AG04449 (cell line): ENCODE measurements at regions of chr9 and their contacts with region 1.

Region 1: DNA sequence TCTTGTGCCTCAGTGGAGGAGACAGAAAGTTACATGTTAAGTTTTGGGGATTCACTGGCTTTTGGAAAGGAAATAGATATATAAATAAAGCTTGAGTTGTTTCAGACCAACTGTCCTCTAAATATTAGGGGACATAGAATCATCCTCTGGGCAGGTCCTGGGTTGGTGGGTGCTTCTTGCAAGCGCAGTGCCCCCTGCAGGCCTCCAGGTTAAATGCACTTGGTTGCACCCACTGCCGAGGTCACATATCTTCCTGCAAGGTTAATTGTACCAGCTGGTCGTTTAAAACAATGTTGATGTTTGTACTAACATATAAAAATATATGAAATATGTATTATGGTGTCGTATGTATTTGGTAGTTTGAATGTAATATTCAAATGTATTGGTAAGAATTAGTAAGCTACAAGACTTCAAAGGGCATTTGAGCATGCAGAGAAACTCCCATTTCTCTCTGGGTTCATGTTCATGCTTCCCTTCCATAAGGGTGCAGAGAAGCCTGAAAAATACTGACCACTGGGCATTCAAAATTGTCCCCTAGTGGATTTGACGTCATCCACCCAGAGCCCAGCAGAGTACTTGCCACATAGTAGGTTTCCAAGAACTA is 87.0 kb downstream of the ZNF618 start:
- DNase-seq: no peak
- H3K4me3 ChIP-seq: no peak overlapping the region
- CTCF ChIP-seq: peak; percentile 66

Region 2: GRCh38 chr9:113516840-113517577 is 446.1 kb before region 1 on chr9:
- CTCF ChIA-PET with region 1: no interaction called
- POLR2A ChIA-PET with region 1: no interaction called
- DNase-seq: no peak
- H3K4me3 ChIP-seq: no peak overlapping the region
- CTCF ChIP-seq: no peak

Region 3: DNA sequence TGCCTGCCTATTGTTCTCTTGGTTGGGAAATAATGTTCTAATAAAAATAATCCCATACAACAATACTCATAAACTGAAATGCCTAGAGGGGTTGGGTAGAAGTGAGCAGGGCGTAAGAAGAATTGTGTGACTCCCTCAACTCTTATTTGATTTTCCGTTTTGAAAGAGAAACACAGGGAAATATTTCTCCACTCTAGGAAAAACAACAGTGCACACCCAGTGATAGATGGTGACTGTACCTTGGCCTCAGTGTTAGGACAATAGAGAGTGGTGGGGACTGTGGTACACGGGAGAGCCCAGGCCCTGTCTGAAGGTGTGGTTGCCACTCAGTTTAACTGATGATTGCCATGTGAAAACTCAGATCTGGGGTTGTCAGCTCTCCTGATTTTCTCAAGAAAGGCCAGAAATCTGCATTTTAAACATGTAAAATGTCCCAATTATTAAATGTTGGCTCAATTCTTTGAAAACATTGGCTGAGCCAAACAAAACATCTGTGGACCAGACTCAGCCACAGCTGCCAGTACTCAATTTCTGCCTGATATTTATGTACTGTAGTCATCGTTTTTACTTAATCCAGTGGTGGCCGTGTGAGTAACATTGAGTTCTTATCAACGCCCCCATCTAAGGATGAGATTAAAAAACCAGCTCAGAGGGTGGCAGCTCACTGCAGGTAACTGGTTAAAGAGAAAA is 190.9 kb before region 1 on chr9:
- CTCF ChIA-PET with region 1: no interaction called
- POLR2A ChIA-PET with region 1: no interaction called
- DNase-seq: peak; percentile 9
- H3K4me3 ChIP-seq: no peak overlapping the region
- CTCF ChIP-seq: no peak

Region 4: DNA sequence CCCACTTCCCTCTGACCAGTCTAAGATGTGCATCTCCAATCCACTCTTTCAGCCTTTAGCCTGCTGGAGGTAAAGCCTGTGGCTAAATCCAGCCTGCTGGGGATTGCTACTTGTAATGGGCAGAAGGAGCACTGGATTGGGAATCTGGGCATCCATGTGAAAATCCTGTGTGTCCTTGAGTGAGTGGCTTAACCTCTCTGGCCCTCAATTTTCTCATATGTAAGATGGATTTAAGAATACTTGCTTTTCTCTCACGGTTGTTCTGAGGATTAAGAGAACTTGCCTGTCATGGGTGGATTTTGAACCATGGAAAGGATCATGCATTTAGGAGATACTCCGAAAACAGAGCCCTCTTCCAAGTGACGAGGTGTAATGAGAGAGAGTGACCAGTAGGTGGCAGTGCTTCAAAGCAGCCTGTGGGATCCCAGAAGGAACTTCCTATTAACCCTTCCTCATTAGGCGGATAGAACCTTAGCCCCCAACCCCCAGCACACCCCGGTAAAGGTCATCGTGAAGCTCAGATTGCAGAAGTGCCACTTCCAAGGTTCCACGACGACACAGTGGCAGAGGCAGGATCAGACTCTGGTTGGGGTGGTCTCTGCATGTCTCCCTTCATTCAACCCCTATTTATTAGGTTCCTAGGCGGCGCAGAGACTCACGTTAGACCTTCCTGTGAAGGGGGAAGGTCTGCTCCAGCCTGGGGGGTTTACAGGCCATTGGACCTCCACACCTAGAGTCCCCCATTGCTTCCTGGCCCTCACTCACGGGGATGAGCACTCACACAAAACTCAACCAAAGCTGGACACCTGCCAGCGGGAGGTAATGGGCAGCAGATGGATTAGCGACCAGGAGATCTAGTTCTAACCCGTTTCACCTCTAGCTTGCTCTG is 155.7 kb before region 1 on chr9:
- CTCF ChIA-PET with region 1: interaction called, 45 read pairs
- POLR2A ChIA-PET with region 1: no interaction called
- DNase-seq: no peak
- H3K4me3 ChIP-seq: peak overlapping the region; percentile 33
- CTCF ChIP-seq: peak; percentile 88

Region 5: DNA sequence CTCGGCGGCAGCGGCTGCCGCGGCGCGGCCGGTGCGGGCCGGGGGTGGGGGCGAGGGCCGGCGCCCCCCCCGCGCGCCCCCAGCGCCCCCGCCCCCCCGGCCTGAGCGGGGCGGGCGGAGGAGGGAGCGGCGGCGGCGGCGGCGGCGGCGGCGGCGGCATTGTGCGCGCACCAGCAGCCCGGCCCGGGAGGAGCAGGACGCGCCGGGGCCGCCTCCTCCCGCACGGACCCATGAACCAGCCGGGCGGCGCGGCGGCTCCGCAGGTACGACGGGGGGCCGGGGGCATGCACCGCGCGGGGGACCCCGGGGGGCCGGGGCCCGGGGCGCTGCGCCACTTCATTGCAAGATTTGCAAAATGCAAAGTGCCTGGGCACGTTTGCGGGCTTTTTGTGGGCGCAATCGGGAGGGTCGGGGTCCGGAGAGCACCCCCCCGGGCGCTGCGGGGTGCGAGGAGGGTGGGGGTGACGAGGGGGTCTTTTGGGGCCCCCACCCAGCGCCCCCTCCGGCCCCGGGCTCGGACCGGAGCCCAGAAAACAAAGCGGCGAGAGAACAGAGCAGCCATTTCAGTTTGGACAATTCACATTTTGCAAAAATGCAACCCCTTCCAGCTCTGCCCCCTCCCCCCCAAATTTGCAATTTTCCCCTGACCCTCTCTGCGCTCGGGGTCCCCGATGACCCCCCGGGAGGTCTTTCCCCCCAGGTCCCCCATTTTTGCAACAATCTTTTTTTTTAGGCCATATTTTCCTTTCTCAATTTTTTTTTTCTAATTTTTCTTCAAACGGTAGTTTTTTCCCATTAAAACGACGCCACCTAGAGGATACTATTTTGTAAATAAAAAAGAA is 86.7 kb before region 1 on chr9 and contains the start of gene ZNF618:
- CTCF ChIA-PET with region 1: interaction called, 12 read pairs
- POLR2A ChIA-PET with region 1: no interaction called
- DNase-seq: no peak
- H3K4me3 ChIP-seq: peak within 1 kb of the TSS; percentile 68
- CTCF ChIP-seq: no peak

Region 6: GRCh38 chr9:113948891-113949570 is 14.1 kb before region 1 on chr9:
- CTCF ChIA-PET with region 1: interaction called, 16 read pairs
- POLR2A ChIA-PET with region 1: no interaction called
- DNase-seq: no peak
- H3K4me3 ChIP-seq: no peak overlapping the region
- CTCF ChIP-seq: no peak

Region 7: DNA sequence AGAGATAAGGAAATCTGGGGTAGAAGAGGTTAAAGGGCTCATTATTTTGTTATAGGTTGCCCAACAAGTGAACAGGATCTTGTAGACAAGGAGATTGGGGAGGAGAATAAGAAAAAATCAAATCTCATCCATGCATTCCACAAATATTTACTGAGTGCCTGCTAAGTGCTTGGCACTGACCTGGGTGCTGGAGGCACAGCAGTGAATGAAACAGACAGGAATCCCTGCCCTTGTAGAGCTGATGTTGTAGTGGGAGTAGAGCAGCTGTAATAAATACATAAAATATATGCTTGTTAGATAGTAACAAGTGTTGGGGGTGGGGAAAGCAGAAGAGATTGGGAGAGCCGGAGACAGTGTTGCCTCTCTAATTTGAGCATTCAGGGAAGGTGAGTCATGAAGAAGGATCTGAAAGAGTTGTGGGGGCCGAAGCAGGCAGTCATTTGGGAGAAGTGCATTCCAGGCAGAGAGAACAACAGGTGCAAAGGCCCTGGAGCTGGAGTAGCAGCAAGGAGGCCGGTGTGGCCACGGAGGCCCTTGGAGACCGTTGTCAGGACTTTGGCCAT is 10.8 kb after region 1 on chr9:
- CTCF ChIA-PET with region 1: interaction called, 41 read pairs
- POLR2A ChIA-PET with region 1: no interaction called
- DNase-seq: no peak
- H3K4me3 ChIP-seq: no peak overlapping the region
- CTCF ChIP-seq: no peak

Region 8: DNA sequence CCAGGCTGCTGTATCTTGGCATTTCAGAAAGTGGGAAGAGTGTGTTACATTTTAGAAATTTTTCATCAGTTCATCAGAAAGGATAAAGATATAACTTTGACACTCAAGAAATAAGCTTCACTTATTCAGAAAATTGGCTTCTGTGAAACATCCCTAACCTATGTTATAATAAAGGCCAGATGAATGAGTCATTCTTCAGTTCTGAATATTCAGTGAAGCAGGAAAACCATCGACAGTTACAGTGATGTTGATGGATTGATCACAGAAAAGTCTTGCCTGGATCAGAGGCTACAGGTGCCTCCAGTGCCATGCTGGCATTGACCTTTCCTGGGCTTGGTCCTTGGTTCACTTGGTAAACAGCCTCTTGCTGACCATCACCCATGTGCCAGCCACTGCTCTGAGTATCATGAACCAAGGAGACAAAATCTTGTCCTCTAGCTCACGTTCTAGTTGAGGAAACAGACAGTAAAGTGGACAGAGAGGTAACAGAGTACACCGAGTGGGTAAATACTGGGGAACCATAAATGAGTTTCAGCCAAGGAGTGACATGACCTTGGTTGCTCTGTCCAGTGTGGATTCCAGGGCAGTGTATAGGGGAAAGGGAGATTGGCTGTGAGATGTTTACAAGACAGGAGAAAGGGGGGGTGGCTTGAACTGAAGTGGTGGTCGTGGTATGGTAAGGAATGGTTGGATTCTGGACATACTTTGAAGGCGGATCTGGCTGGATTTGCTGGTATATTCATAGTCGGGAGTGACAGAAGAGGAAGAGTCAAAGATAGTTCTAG is 16.4 kb after region 1 on chr9:
- CTCF ChIA-PET with region 1: interaction called, 41 read pairs
- POLR2A ChIA-PET with region 1: no interaction called
- DNase-seq: no peak
- H3K4me3 ChIP-seq: no peak overlapping the region
- CTCF ChIP-seq: no peak